Activated naive CD4-positive, alpha-beta T cell treated with anti-CD3 and anti-CD28 coated beads for 36 hours (primary cell): ENCODE measurements at regions of chr9 and their contacts with region 1.

Region 1: GRCh38 chr9:5628530-5629311 is at the start of gene RIC1:
- DNase-seq: peak; percentile 90
- H3K4me3 Mint-ChIP-seq: peak within 1 kb of the TSS; percentile 99
- H3K27ac Mint-ChIP-seq: peak within 1 kb of the TSS; percentile 100
- H3K4me1 Mint-ChIP-seq: peaks cover 59% of the 10 kb centered on the region
- H3K27me3 Mint-ChIP-seq: no peaks in the 10 kb centered on the region
- total RNA-seq, gene RIC1: 14.5 to 16.4 TPM

Region 2: GRCh38 chr9:4679268-4680172 is 949.2 kb before region 1 on chr9 and contains the start of gene CDC37L1:
- CTCF ChIA-PET with region 1: no interaction called
- intact Hi-C with region 1: loop called (anchors 1 kb)
- DNase-seq: peak; percentile 99
- H3K4me3 Mint-ChIP-seq: no peak within 1 kb of the TSS
- H3K27ac Mint-ChIP-seq: no peak within 1 kb of the TSS
- H3K4me1 Mint-ChIP-seq: peaks cover 17% of the 10 kb centered on the region
- H3K27me3 Mint-ChIP-seq: no peaks in the 10 kb centered on the region
- total RNA-seq, gene CDC37L1: 13.7 to 14.5 TPM

Region 3: DNA sequence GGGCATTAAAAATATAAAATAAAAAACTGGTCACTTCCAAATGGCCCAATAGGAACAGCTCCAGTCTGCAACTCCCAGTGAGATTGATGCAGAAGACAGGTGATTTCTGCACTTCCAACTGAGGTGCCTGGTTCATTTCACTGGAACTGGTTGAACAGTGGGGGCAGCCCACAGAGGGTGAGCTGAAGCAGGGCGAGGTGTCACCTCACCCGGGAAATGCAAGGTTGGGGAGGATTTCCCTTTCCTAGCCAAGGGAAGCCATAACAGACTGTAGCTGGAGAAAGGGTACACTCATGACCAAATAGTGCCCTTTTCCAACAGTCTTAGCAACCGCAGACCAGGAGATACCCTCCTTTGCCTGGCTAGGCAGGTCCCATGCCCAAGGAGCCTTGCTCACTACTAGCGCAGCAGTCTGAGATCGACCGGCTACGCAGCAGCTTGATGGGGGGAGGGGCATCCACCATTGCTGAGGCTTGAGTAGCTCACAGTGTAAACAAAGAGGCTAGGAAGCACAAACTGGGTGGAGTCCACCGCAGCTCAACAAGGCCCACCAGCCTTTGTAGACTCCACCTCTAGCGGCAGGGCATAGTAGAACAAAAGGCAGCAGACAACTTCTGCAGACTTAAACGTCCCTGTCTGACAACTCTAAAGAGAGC is 301.7 kb before region 1 on chr9:
- CTCF ChIA-PET with region 1: no interaction called
- intact Hi-C with region 1: no loop called
- DNase-seq: peak; percentile 23
- H3K4me3 Mint-ChIP-seq: no peak overlapping the region
- H3K27ac Mint-ChIP-seq: no peak overlapping the region
- H3K4me1 Mint-ChIP-seq: peaks cover 19% of the 10 kb centered on the region
- H3K27me3 Mint-ChIP-seq: no peaks in the 10 kb centered on the region

Region 4: GRCh38 chr9:5437254-5438216 is 191.2 kb before region 1 on chr9 and contains the start of gene PLGRKT:
- CTCF ChIA-PET with region 1: interaction called, 3 read pairs
- intact Hi-C with region 1: loop called (anchors 1 kb)
- DNase-seq: peak; percentile 95
- H3K4me3 Mint-ChIP-seq: peak within 1 kb of the TSS; percentile 92
- H3K27ac Mint-ChIP-seq: peak within 1 kb of the TSS; percentile 98
- H3K4me1 Mint-ChIP-seq: peaks cover 51% of the 10 kb centered on the region
- H3K27me3 Mint-ChIP-seq: no peaks in the 10 kb centered on the region
- total RNA-seq, gene PLGRKT: 48.9 to 51.4 TPM

Region 5: GRCh38 chr9:5617749-5618148 is 11.0 kb before region 1 on chr9:
- CTCF ChIA-PET with region 1: interaction called, 5 read pairs
- intact Hi-C with region 1: loop called (anchors 1 kb)
- DNase-seq: no peak
- H3K4me3 Mint-ChIP-seq: no peak overlapping the region
- H3K27ac Mint-ChIP-seq: peak overlapping the region; percentile 0
- H3K4me1 Mint-ChIP-seq: peaks cover 33% of the 10 kb centered on the region
- H3K27me3 Mint-ChIP-seq: no peaks in the 10 kb centered on the region

Region 6: DNA sequence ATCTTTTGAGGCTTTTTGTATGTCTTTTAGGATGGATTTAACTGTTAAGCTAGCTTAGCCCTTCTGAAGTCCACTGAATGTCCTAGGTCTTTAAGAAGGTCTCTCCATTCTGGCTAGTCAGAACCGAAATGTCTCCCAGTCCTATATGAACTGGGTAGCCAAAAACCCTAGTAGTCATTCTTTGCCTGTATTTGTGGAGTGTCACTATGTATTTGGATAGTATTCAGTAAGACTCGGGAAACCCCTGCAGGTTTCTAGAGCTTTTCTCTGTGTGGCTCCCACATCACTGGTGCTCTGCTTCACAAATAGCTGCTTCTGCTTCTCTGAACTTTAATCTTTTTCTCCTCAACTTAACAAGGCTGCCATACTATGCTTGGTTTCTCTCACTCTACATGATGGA is 68.2 kb after region 1 on chr9:
- CTCF ChIA-PET with region 1: no interaction called
- intact Hi-C with region 1: no loop called
- DNase-seq: peak; percentile 10
- H3K4me3 Mint-ChIP-seq: no peak overlapping the region
- H3K27ac Mint-ChIP-seq: no peak overlapping the region
- H3K4me1 Mint-ChIP-seq: peaks cover 18% of the 10 kb centered on the region
- H3K27me3 Mint-ChIP-seq: no peaks in the 10 kb centered on the region

Region 7: DNA sequence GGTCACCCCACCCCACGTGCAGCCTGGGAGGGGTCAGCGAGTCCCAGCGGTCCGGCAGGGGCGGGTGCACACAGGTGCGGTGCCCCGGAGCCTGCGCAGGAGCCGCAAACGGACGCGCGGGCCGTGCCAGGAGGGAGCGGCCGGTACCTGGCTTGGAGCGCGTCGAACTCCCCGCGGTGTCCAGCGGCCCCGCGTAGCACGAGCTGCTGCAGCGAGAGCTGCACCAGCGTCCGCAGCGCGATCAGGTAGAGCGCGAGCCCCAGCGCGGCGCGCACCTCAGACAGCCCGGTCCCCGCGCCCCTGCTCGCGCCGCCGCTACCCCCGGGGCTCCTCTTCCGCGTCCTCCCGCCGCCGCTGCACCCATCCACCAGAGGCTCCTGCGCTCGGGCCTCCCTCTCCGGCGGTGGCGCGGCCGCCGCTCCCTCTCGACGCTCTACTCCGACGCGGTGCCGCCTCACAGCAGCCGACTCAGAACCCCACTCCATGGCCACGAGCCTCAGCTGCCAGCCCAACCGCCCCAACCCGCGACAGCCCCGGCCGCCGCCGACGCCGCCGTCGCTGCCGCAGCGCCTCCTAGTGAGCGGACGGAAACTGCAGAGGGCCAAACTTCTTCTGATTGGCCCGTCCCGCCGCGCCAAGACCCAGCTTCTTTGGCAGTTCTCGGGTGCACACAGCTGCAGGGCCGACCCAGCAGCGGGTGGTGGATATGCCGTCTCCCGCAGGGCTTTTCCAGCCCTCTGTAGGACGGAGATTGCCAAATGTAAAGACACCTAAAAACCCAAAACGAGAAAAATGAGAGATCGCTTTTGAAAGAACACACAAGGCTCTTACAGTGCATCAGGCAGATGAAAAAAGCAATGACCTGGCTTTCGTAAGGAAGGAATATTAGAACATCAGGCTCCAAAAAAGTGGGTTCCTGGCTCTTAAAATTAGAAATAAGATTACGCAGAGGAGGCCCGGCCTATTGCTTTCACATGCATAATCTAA is 204.1 kb after region 1 on chr9 and contains the start of gene ERMP1:
- CTCF ChIA-PET with region 1: interaction called, 3 read pairs
- intact Hi-C with region 1: loop called (anchors 1 kb)
- DNase-seq: peak; percentile 93
- H3K4me3 Mint-ChIP-seq: peak within 1 kb of the TSS; percentile 93
- H3K27ac Mint-ChIP-seq: peak within 1 kb of the TSS; percentile 89
- H3K4me1 Mint-ChIP-seq: peaks cover 43% of the 10 kb centered on the region
- H3K27me3 Mint-ChIP-seq: no peaks in the 10 kb centered on the region
- total RNA-seq, gene ERMP1: 23.5 to 27.1 TPM

Region 8: GRCh38 chr9:6681147-6681956 is 1052.6 kb after region 1 on chr9:
- CTCF ChIA-PET with region 1: no interaction called
- intact Hi-C with region 1: loop called (anchors 5 kb)
- DNase-seq: peak; percentile 94
- H3K4me3 Mint-ChIP-seq: peak overlapping the region; percentile 95
- H3K27ac Mint-ChIP-seq: peak overlapping the region; percentile 99
- H3K4me1 Mint-ChIP-seq: peaks cover 18% of the 10 kb centered on the region
- H3K27me3 Mint-ChIP-seq: no peaks in the 10 kb centered on the region